H1 (cell line): ENCODE measurements at regions of chr16 and their contacts with region 1.

Region 1: DNA sequence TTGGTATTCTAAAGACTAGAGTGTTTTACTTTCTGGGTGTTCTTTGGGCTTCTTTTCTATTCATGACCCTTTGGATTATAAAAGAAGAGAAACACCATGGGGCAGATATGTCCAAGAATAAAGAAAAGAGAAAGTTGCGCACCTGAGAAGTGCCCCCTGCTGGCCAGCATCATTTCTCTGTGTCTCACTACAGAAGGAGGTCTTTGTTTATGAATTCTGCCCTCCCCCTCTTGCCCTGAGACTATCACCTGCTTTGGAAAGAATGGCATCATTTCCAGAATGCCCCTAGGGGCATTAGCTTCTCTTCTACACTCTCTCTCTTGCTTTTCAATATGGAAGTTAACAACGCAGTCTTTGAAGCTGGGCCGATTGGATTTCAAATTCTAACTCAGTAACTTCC is 45.0 kb downstream of the CDH13 start:
- DNase-seq: peak in 1 of 2 experiments; percentile 50
- H3K4me3 ChIP-seq: no peak overlapping the region
- H3K27ac ChIP-seq: no peak overlapping the region
- H3K4me1 ChIP-seq: peaks cover 0 to 2% (median 0%) of the 10 kb centered on the region in 4 experiments; a peak in 1 of 7 replicates
- H3K27me3 ChIP-seq: no peaks in the 10 kb centered on the region
- CTCF ChIP-seq: peak; percentile 14 to 46 (median 25); a peak in 3 of 4 replicates
- EP300 ChIP-seq: no peak
- POLR2A ChIP-seq: no peak
- RAD21 ChIP-seq: peak in 1 of 2 experiments; percentile 31; a peak in 1 of 4 replicates

Region 2: GRCh38 chr16:82684251-82684650 is 12.5 kb after region 1 on chr16:
- CTCF ChIA-PET with region 1: interaction called, 11 read pairs
- POLR2A ChIA-PET with region 1: no interaction called
- DNase-seq: no peak
- H3K4me3 ChIP-seq: no peak overlapping the region
- H3K27ac ChIP-seq: no peak overlapping the region
- H3K4me1 ChIP-seq: no peaks in the 10 kb centered on the region
- H3K27me3 ChIP-seq: no peaks in the 10 kb centered on the region
- CTCF ChIP-seq: no peak
- EP300 ChIP-seq: no peak
- POLR2A ChIP-seq: no peak
- RAD21 ChIP-seq: no peak

Region 3: GRCh38 chr16:82694239-82694863 is 22.6 kb after region 1 on chr16:
- CTCF ChIA-PET with region 1: interaction called, 10 read pairs
- POLR2A ChIA-PET with region 1: no interaction called
- DNase-seq: no peak
- H3K4me3 ChIP-seq: no peak overlapping the region
- H3K27ac ChIP-seq: no peak overlapping the region
- H3K4me1 ChIP-seq: peaks cover 0 to 3% (median 1%) of the 10 kb centered on the region in 4 experiments; a peak in 1 of 7 replicates
- H3K27me3 ChIP-seq: no peaks in the 10 kb centered on the region
- CTCF ChIP-seq: no peak
- EP300 ChIP-seq: no peak
- POLR2A ChIP-seq: no peak
- RAD21 ChIP-seq: no peak

Region 4: GRCh38 chr16:82899731-82900450 is 228.2 kb after region 1 on chr16:
- CTCF ChIA-PET with region 1: no interaction called
- POLR2A ChIA-PET with region 1: no interaction called
- DNase-seq: no peak
- H3K4me3 ChIP-seq: no peak overlapping the region
- H3K27ac ChIP-seq: no peak overlapping the region
- H3K4me1 ChIP-seq: no peaks in the 10 kb centered on the region
- H3K27me3 ChIP-seq: no peaks in the 10 kb centered on the region
- CTCF ChIP-seq: no peak
- EP300 ChIP-seq: no peak
- POLR2A ChIP-seq: no peak
- RAD21 ChIP-seq: no peak